SK-N-SH (cell line): ENCODE measurements at regions of chr2 and their contacts with region 1.

Region 1: GRCh38 chr2:222690564-222691200 is 19.2 kb downstream of the MOGAT1 start:
- DNase-seq: peak; percentile 89
- H3K4me3 ChIP-seq: peak overlapping the region in 1 of 2 experiments; percentile 51; a peak in 1 of 4 replicates
- H3K27ac ChIP-seq: no peak overlapping the region
- H3K4me1 ChIP-seq: 0 out of 4 replicates have a peak, but pooled peaks cover 0 to 7% of the 10 kb centered on the region in 2 experiments
- H3K27me3 ChIP-seq: no peaks in the 10 kb centered on the region
- CTCF ChIP-seq: peak; percentile 100
- EP300 ChIP-seq: no peak
- RAD21 ChIP-seq: peak; percentile 88

Region 2: DNA sequence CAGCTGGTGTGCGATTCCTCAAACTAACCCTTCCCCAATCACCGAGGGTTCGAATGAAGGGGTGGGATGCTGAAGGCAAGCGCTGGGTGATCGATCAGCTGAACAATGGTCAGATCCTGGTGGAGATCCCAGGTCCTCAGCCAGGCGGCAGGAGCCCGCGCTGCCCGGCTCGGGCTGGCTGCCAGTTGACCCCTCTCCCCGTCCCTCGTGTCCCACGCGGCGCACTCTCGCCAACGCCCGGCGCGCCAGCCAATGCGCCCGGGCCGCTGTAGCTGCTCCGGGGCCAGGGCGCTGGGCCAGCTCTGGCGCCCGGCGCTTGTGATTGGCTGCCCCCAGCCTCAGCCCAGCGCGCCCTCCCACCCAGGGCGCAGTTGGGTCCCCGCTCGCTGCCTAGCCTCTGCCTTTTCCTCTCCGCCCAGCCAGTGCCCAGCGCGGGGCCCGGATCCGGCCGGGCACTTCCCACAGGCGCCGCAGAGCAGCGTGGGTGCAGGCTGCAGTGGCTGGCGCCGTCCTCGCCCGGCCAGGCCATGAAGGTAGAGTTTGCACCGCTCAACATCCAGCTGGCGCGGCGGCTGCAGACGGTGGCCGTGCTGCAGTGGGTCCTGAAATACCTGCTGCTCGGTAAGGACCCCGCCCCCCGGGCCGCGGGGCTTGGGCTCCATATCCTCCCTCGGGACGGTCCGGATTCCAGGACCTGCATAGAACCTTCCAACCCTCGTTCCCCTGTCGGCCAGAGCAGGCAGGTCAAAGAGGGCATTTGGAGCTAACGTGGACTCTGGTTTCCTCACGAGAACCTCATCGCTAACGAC is 19.2 kb before region 1 on chr2 and contains the start of gene MOGAT1:
- CTCF ChIA-PET with region 1: interaction called, 20 read pairs
- POLR2A ChIA-PET with region 1: no interaction called
- DNase-seq: peak; percentile 96
- H3K4me3 ChIP-seq: peak within 1 kb of the TSS; percentile 53 to 60
- H3K27ac ChIP-seq: no peak within 1 kb of the TSS
- H3K4me1 ChIP-seq: peaks cover 0 to 9% of the 10 kb centered on the region in 2 experiments; a peak in 1 of 4 replicates
- H3K27me3 ChIP-seq: peaks cover 5% of the 10 kb centered on the region; the same call in 1 of the 2 replicates
- CTCF ChIP-seq: no peak
- EP300 ChIP-seq: no peak
- RAD21 ChIP-seq: no peak
- polyA plus RNA-seq, gene MOGAT1: not detected in 2 replicates

Region 3: GRCh38 chr2:222701721-222702131 is 11.0 kb after region 1 on chr2:
- CTCF ChIA-PET with region 1: interaction called, 51 read pairs
- POLR2A ChIA-PET with region 1: no interaction called
- DNase-seq: no peak
- H3K4me3 ChIP-seq: no peak overlapping the region
- H3K27ac ChIP-seq: no peak overlapping the region
- H3K4me1 ChIP-seq: no peaks in the 10 kb centered on the region
- H3K27me3 ChIP-seq: no peaks in the 10 kb centered on the region
- CTCF ChIP-seq: no peak
- EP300 ChIP-seq: no peak
- RAD21 ChIP-seq: no peak

Region 4: DNA sequence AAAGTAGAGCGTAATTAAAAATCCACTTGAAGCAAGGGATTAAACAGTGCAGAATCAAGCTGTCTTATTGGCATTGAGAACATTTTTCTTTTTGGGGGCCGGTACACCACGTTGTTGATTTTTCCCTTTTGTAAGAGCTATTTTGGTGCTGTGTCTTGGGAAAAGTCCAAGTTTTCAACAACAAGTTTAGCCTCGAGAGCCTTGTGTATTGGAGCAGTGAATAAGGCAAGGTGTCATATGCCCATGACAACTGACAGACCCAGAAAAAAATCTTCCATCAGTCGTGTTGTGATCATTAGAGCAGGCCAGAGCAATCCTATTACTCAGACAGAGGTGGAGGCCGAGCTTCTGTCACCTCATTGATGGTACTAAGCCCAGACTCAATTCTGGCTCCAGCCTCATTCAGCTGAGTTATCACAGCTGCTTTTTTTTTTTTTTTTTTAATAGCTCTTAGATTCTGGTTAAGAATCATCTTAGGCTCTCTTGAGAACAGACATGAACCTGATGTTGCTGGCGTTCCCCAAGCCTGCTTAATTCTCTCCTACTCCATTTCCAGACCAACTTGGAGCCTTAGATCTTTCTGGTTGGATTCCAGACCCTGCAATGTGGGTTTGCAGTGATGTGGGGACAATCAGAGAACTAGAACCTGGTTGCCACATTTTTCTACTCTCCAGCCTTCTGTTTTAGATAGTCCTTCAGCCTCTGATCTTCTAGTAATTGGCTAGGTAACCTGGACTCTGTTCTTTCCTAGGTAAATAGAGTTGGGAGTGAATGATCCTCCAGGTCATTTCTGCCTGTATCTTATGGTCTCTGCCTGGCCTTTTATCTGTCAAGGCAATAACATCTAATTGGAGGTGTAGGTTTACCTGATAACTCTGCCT is 23.9 kb after region 1 on chr2:
- CTCF ChIA-PET with region 1: interaction called, 51 read pairs
- POLR2A ChIA-PET with region 1: no interaction called
- DNase-seq: no peak
- H3K4me3 ChIP-seq: no peak overlapping the region
- H3K27ac ChIP-seq: no peak overlapping the region
- H3K4me1 ChIP-seq: no peaks in the 10 kb centered on the region
- H3K27me3 ChIP-seq: no peaks in the 10 kb centered on the region
- CTCF ChIP-seq: no peak
- EP300 ChIP-seq: no peak
- RAD21 ChIP-seq: no peak

Region 5: GRCh38 chr2:222753251-222753824 is 62.7 kb after region 1 on chr2:
- CTCF ChIA-PET with region 1: interaction called, 11 read pairs
- POLR2A ChIA-PET with region 1: no interaction called
- DNase-seq: peak; percentile 29
- H3K4me3 ChIP-seq: no peak overlapping the region
- H3K27ac ChIP-seq: peak overlapping the region in 1 of 2 experiments; percentile 41; a peak in 2 of 4 replicates
- H3K4me1 ChIP-seq: peaks cover 0 to 16% of the 10 kb centered on the region in 2 experiments; a peak in 2 of 4 replicates
- H3K27me3 ChIP-seq: no peaks in the 10 kb centered on the region
- CTCF ChIP-seq: no peak
- EP300 ChIP-seq: no peak
- RAD21 ChIP-seq: no peak

Region 6: DNA sequence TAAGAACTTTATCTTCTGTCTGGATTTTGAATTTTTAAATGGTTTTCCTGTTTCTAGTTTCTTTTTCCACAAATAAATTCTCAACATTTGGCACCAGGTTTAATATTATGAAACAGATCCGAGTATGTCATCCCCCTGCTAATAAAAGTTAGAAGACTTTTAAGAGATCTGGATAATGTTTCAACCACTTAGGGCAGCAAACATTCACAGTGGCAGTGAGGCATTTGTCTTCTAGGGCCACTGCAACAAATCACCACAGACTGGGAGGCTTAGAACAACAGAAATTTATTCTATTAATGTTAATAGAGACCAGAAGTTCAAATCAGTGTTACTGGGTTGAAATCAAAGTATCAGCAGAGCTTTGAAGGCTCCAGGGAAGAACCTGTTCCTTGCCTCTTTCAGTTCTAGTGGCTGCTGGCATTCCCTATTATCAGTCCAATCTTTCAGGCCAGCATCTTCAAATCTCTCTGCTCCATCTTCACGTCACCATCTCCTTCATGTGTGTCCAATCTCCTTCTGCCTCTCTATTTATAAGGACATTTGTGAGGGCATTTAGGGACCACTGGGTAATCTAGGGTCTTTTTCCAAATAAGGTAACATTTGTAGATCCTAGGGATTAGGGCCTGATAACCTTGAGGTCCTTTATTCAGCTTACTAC is 193.6 kb after region 1 on chr2:
- CTCF ChIA-PET with region 1: interaction called, 10 read pairs
- POLR2A ChIA-PET with region 1: no interaction called
- DNase-seq: no peak
- H3K4me3 ChIP-seq: no peak overlapping the region
- H3K27ac ChIP-seq: peak overlapping the region; percentile 24 to 82
- H3K4me1 ChIP-seq: peaks cover 25 to 28% of the 10 kb centered on the region in 2 experiments; a peak in 3 of 4 replicates
- H3K27me3 ChIP-seq: no peaks in the 10 kb centered on the region
- CTCF ChIP-seq: no peak
- EP300 ChIP-seq: peak in 1 of 2 experiments; percentile 80; a peak in 2 of 4 replicates
- RAD21 ChIP-seq: no peak

Region 7: DNA sequence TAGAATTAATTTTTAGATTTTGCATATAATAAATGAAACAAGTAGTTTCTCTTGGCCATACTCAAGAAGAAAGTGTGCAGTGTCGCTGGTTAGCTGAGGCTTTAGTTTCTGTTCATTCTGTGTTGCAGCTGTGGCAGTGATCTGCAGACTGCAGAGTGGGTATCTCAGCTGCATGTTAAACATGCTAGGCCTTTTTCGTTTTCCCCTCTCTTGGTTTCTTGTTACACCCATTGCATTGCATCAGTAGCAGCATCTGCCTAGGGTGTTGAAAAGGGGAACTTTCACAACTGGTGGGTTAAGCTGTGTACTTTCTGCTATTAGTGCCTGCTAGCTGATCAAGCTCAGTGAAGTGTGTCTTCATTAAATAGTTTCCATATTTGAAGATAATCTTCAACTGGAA is 221.4 kb after region 1 on chr2:
- CTCF ChIA-PET with region 1: interaction called, 25 read pairs
- POLR2A ChIA-PET with region 1: no interaction called
- DNase-seq: no peak
- H3K4me3 ChIP-seq: no peak overlapping the region
- H3K27ac ChIP-seq: no peak overlapping the region
- H3K4me1 ChIP-seq: peaks cover 0 to 20% of the 10 kb centered on the region in 2 experiments; a peak in 2 of 4 replicates
- H3K27me3 ChIP-seq: no peaks in the 10 kb centered on the region
- CTCF ChIP-seq: no peak
- EP300 ChIP-seq: no peak
- RAD21 ChIP-seq: no peak